PC-3 (cell line): ENCODE measurements at regions of chr4 and their contacts with region 1.

Region 1: DNA sequence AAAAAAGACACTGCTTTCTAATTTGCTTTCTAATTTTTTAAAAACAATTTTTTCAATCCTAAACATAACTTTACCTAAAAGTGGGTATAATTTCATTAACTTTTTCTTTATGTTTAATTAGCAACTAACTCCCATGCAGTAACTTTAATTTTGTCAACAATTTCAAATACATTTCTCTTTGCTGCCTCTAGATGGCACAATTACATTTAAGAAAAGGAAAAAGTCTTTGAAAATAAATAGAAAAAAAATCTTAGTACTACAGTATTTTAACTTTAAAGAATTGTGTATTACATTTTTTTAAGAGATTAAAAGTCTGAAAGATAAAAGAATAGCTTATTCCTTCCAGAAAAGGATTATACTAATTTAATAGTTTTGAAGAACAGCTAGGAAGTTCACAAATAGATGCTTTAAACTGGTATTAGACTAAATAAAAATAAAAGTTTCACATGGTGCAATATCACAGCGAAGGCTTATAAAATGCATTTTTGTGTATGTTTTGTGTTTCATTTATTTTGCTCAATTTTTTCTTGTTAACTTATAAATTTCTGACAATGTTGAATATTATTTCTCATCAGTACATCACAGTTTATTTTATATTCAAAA is 105.1 kb downstream of the ADGRA3 start:
- DNase-seq: peak; percentile 32
- ATAC-seq: no peak
- H3K4me3 ChIP-seq: no peak overlapping the region
- H3K27ac ChIP-seq: no peak overlapping the region
- H3K4me1 ChIP-seq: 0 out of 2 replicates have a peak, but pooled peaks cover under 1% of the 10 kb centered on the region
- H3K27me3 ChIP-seq: no peaks in the 10 kb centered on the region
- CTCF ChIP-seq: peak; percentile 65

Region 2: DNA sequence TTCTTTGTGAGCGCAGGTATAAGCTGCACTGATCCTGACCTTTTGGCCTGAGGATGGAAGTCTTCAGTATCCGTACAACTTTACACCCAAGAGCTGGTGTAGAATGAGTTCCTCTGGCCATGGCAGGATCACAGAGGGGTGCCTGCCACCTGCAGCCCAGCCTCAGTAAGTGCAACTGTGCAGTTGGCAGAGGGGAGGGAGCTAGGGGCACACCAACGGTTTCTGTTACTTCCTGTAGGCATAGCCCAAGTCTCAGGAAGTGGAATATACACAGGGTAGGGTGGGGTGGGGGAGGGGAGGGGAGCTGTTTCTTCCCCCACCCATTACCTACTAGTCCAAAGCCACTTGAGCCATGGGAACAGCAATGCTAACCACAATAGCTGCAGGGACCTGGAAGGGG is 196.6 kb after region 1 on chr4:
- CTCF ChIA-PET with region 1: interaction called, 5 read pairs
- POLR2A ChIA-PET with region 1: no interaction called
- intact Hi-C with region 1: loop called (anchors 1 kb)
- DNase-seq: peak; percentile 62
- ATAC-seq: peak; percentile 99
- H3K4me3 ChIP-seq: no peak overlapping the region
- H3K27ac ChIP-seq: no peak overlapping the region
- H3K4me1 ChIP-seq: no peaks in the 10 kb centered on the region
- H3K27me3 ChIP-seq: no peaks in the 10 kb centered on the region
- CTCF ChIP-seq: peak; percentile 62

Region 3: GRCh38 chr4:22688236-22688635 is 277.5 kb after region 1 on chr4:
- CTCF ChIA-PET with region 1: no interaction called
- POLR2A ChIA-PET with region 1: no interaction called
- intact Hi-C with region 1: loop called (anchors 1 kb)
- DNase-seq: no peak
- ATAC-seq: no peak
- H3K4me3 ChIP-seq: no peak overlapping the region
- H3K27ac ChIP-seq: no peak overlapping the region
- H3K4me1 ChIP-seq: no peaks in the 10 kb centered on the region
- H3K27me3 ChIP-seq: peaks cover 42% of the 10 kb centered on the region
- CTCF ChIP-seq: no peak